Naive thymus-derived CD4-positive, alpha-beta T cell (primary cell): ENCODE measurements at regions of chr19 and their contacts with region 1.

Region 1: GRCh38 chr19:29844891-29845572 is 33.2 kb downstream of the CCNE1 start:
- DNase-seq: peak; percentile 94 to 99 (median 96)
- ATAC-seq: peak; percentile 86
- H3K4me3 ChIP-seq: peak overlapping the region; percentile 97
- H3K4me3 Mint-ChIP-seq: peak overlapping the region; percentile 87 to 98 (median 92)
- H3K27ac ChIP-seq: peak overlapping the region; percentile 92
- H3K27ac Mint-ChIP-seq: peak overlapping the region; percentile 83 to 97 (median 91)
- H3K4me1 ChIP-seq: peaks cover 9 to 17% of the 10 kb centered on the region in 2 donors
- H3K4me1 Mint-ChIP-seq: peaks cover 11 to 19% (median 14%) of the 10 kb centered on the region in 7 donors
- H3K27me3 ChIP-seq: no peaks in the 10 kb centered on the region
- H3K27me3 Mint-ChIP-seq: peaks cover 0 to 1% (median 0%) of the 10 kb centered on the region in 5 donors

Region 2: DNA sequence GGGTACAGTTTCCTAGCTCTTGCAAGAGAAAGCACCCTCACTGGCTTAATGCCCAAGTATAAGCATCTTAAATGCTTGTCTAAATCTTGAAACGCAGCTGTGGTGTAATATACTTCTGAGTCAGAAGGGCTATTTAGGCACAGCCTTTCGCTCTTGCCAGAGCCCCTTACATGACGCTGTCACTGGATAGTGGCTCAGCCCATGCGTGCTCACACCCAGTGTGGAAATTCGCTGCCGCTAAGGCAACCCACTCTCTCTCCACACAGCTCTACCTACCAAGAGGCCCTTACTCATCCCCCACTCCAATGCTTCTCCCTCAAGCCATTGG is 656.0 kb before region 1 on chr19:
- CTCF ChIA-PET with region 1: no interaction called
- POLR2A ChIA-PET with region 1: no interaction called
- intact Hi-C with region 1: no loop called
- DNase-seq: no peak
- ATAC-seq: no peak
- H3K4me3 ChIP-seq: no peak overlapping the region
- H3K4me3 Mint-ChIP-seq: no peak overlapping the region
- H3K27ac ChIP-seq: no peak overlapping the region
- H3K27ac Mint-ChIP-seq: no peak overlapping the region
- H3K4me1 ChIP-seq: no peaks in the 10 kb centered on the region
- H3K4me1 Mint-ChIP-seq: peaks cover 4 to 6% (median 5%) of the 10 kb centered on the region in 7 donors
- H3K27me3 ChIP-seq: no peaks in the 10 kb centered on the region
- H3K27me3 Mint-ChIP-seq: peaks cover 0 to 16% (median 5%) of the 10 kb centered on the region in 5 donors

Region 3: DNA sequence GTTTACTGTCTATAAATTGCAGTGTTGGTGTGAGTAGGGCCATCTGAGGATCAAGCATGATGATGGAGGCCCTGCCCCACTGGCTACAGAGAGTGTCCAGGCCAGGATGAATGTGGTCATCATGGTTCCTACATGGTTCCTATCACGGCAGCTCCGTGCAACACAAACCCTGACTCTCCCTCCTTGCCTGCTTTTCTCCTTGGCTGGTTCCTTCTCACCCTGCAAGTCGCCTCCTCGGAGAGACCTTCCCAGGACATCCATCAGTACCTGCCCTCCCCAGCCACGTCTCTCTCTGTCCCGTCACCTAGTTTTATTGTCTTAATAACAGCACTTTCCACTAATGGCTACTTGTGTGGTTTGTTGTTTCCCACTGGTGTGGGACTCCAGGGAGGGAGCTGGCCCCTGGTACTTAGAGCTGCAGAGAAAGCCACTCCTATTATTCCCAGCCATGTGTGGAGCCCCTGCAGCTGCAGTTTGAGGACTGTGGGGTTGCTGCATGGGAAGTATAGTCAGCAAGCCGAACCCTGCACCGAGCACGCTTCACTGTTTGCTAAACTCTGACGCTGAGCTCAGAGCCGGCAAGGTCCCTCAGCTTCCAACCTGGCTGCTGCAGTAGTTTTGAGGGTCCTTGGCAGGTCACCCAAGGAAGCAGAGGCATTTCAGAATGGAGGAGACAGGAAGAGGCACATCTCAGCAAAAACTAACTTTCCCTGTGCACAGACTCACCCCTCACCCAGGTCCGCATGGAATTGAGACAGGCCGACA is 465.6 kb before region 1 on chr19:
- CTCF ChIA-PET with region 1: no interaction called
- POLR2A ChIA-PET with region 1: no interaction called
- intact Hi-C with region 1: no loop called
- DNase-seq: peak in 1 of 9 donors; percentile 3
- ATAC-seq: no peak
- H3K4me3 ChIP-seq: no peak overlapping the region
- H3K4me3 Mint-ChIP-seq: no peak overlapping the region
- H3K27ac ChIP-seq: no peak overlapping the region
- H3K27ac Mint-ChIP-seq: no peak overlapping the region
- H3K4me1 ChIP-seq: no peaks in the 10 kb centered on the region
- H3K4me1 Mint-ChIP-seq: no peaks in the 10 kb centered on the region
- H3K27me3 ChIP-seq: no peaks in the 10 kb centered on the region
- H3K27me3 Mint-ChIP-seq: peaks cover 9 to 54% (median 36%) of the 10 kb centered on the region in 5 donors

Region 4: GRCh38 chr19:29761575-29762232 is 83.3 kb before region 1 on chr19:
- CTCF ChIA-PET with region 1: interaction called, 12 read pairs
- POLR2A ChIA-PET with region 1: interaction called, 4 read pairs
- intact Hi-C with region 1: loop called in 1 of 2 experiments (anchors 1 kb)
- DNase-seq: no peak
- ATAC-seq: no peak
- H3K4me3 ChIP-seq: no peak overlapping the region
- H3K4me3 Mint-ChIP-seq: no peak overlapping the region
- H3K27ac ChIP-seq: no peak overlapping the region
- H3K27ac Mint-ChIP-seq: peak overlapping the region in 1 of 9 donors; percentile 30
- H3K4me1 ChIP-seq: no peaks in the 10 kb centered on the region
- H3K4me1 Mint-ChIP-seq: peaks cover 0 to 3% (median 0%) of the 10 kb centered on the region in 7 donors
- H3K27me3 ChIP-seq: no peaks in the 10 kb centered on the region
- H3K27me3 Mint-ChIP-seq: peaks cover 0 to 8% (median 0%) of the 10 kb centered on the region in 5 donors

Region 5: DNA sequence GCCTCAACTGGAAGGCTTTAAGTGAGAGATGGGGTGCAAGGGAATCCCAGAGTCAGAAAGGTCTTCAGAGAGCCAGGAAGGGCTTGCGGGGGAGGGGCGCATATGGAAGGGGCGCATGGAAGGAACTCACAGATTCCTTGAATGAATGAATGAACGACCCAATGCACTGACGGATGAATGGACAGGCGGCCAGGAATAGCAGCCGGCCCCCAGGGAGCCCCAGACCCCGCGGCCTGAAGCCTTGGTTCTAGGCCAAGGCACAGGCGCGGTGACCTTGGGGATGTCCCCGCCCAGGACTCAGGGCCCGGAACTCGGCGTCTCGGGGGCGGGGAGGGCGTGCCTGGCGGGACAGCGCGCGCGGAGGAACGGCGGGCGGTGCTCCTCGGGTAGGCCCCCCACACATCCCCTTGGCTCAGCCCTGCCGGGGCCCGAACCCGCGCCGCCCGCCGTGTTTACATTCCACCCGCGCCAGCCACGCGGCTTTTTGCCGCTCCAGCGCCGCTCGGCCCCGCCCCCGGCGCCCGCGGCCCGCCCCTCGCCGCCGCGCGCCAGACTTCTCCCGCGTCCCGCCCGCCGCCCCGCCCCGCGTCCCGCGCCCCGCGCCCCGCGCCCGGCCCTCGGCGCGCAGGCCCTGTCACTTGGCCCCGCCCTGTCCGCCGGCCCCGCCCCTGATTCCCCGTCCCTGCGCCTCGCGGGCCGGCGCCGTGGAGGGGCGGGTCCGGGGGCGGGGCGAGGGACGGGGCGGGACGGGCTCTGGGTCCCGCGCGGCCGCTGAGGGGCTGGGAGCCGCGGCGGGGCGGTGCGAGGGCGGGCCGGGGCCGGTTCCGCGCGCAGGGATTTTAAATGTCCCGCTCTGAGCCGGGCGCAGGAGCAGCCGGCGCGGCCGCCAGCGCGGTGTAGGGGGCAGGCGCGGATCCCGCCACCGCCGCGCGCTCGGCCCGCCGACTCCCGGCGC is 33.6 kb before region 1 on chr19 and contains the start of gene CCNE1:
- CTCF ChIA-PET with region 1: no interaction called
- POLR2A ChIA-PET with region 1: interaction called, 28 read pairs
- intact Hi-C with region 1: loop called (anchors 1 kb)
- DNase-seq: peak; percentile 85 to 98 (median 91)
- ATAC-seq: peak; percentile 98
- H3K4me3 ChIP-seq: peak within 1 kb of the TSS; percentile 48
- H3K4me3 Mint-ChIP-seq: peak within 1 kb of the TSS; percentile 83 to 96 (median 90)
- H3K27ac ChIP-seq: peak within 1 kb of the TSS; percentile 69
- H3K27ac Mint-ChIP-seq: peak within 1 kb of the TSS; percentile 56 to 94 (median 85)
- H3K4me1 ChIP-seq: no peaks in the 10 kb centered on the region
- H3K4me1 Mint-ChIP-seq: peaks cover 0 to 36% (median 11%) of the 10 kb centered on the region in 7 donors
- H3K27me3 ChIP-seq: no peaks in the 10 kb centered on the region
- H3K27me3 Mint-ChIP-seq: no peaks in the 10 kb centered on the region
- total RNA-seq, gene CCNE1: 5.3 to 36.1 (median 6.6) TPM

Region 6: DNA sequence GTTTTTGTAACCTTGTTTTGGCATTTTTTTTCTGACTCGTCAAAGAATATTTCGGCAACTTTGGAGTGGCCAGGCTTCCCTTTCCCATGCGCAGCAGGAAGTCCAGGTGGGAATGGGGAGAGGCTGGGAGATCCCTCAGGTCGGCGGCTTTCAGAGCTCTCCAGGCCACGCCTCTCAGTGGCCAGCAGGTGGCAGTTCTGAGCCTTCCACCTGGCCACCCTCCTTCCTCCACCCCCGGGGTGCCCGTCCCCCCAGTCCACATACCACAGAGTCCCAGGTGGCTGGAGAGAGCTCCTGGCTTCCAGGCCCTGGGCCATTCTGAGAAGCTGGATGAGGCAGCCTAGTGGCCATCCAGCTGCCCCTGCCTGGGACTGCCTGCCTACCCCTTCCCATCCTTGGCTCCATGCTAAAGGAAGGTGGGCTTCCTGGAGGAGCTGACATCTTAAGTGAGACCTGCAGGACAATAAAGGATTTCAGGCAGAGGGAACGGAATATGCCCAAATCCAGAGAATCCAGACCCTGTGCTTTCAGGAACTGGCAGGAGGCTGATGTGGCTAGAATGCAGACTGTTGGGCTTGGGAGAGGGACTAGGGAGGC is 13.1 kb after region 1 on chr19:
- CTCF ChIA-PET with region 1: interaction called, 4 read pairs
- POLR2A ChIA-PET with region 1: interaction called, 11 read pairs
- intact Hi-C with region 1: no loop called
- DNase-seq: peak in 7 of 9 donors; percentile 32 to 48 (median 37)
- ATAC-seq: peak; percentile 80
- H3K4me3 ChIP-seq: no peak overlapping the region
- H3K4me3 Mint-ChIP-seq: no peak overlapping the region
- H3K27ac ChIP-seq: no peak overlapping the region
- H3K27ac Mint-ChIP-seq: no peak overlapping the region
- H3K4me1 ChIP-seq: peaks cover 0 to 3% of the 10 kb centered on the region in 2 donors
- H3K4me1 Mint-ChIP-seq: peaks cover 0 to 11% (median 3%) of the 10 kb centered on the region in 7 donors
- H3K27me3 ChIP-seq: peaks cover 0 to 7% of the 10 kb centered on the region in 2 donors
- H3K27me3 Mint-ChIP-seq: peaks cover 0 to 11% (median 4%) of the 10 kb centered on the region in 5 donors

Region 7: GRCh38 chr19:29941828-29942403 is 96.9 kb after region 1 on chr19 and contains the start of gene URI1:
- CTCF ChIA-PET with region 1: no interaction called
- POLR2A ChIA-PET with region 1: interaction called, 8 read pairs
- intact Hi-C with region 1: loop called (anchors 1 kb)
- DNase-seq: peak; percentile 86 to 99 (median 93)
- ATAC-seq: peak; percentile 98
- H3K4me3 ChIP-seq: peak within 1 kb of the TSS; percentile 95
- H3K4me3 Mint-ChIP-seq: peak within 1 kb of the TSS; percentile 92 to 99 (median 96)
- H3K27ac ChIP-seq: peak within 1 kb of the TSS; percentile 88
- H3K27ac Mint-ChIP-seq: peak within 1 kb of the TSS; percentile 86 to 96 (median 94)
- H3K4me1 ChIP-seq: peaks cover 27 to 35% of the 10 kb centered on the region in 2 donors
- H3K4me1 Mint-ChIP-seq: peaks cover 35 to 55% (median 47%) of the 10 kb centered on the region in 7 donors
- H3K27me3 ChIP-seq: no peaks in the 10 kb centered on the region
- H3K27me3 Mint-ChIP-seq: peaks cover 0 to 4% (median 0%) of the 10 kb centered on the region in 5 donors
- total RNA-seq, gene URI1: 55.0 to 106 (median 71.8) TPM

Region 8: DNA sequence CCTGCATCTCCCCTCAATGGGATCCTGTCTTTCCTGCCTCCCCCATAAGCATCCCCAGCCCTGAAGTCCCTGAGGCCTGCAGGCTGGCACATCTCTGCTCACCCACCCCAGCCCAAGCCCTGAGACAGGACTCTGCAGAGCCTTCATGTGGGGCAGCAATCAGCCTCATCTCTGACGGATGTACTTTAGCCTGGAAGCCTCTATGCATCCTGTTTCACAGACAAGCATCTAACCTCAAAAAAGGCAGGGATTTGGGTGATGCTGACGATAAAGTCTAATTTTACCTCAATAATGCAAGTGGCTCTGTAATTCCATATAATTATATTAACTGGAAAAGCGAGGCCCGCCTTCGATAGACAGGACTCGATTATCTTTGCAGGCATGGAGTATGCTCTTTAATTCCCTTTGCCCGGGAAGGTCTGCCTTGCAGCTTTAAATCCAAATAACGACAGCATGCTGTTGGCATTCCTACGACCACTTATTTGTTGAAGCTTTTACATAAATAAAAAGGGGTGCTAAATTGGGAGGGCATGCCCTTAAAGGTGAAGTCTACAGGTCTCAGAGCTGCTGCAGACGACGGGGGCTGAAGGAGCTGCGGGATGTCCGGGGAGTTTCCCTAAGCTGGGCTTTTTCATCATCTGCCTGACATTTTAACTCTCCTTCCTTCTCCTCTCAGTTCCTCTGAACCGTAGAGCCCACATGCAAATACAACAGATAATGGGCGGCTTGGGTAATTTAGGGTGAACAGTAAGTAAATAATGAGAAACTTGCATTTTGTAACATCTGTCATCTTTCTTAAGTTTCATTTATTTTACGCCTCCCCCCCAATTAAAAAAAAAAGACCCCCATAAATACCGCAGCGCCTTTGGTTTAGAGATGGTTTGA is 308.5 kb after region 1 on chr19:
- CTCF ChIA-PET with region 1: no interaction called
- POLR2A ChIA-PET with region 1: no interaction called
- intact Hi-C with region 1: no loop called
- DNase-seq: no peak
- ATAC-seq: no peak
- H3K4me3 ChIP-seq: no peak overlapping the region
- H3K4me3 Mint-ChIP-seq: no peak overlapping the region
- H3K27ac ChIP-seq: no peak overlapping the region
- H3K27ac Mint-ChIP-seq: no peak overlapping the region
- H3K4me1 ChIP-seq: no peaks in the 10 kb centered on the region
- H3K4me1 Mint-ChIP-seq: no peaks in the 10 kb centered on the region
- H3K27me3 ChIP-seq: no peaks in the 10 kb centered on the region
- H3K27me3 Mint-ChIP-seq: peaks cover 0 to 22% (median 5%) of the 10 kb centered on the region in 5 donors